ENCODE measurements at regions of chr13 and their contacts with region 1.

Region 1: DNA sequence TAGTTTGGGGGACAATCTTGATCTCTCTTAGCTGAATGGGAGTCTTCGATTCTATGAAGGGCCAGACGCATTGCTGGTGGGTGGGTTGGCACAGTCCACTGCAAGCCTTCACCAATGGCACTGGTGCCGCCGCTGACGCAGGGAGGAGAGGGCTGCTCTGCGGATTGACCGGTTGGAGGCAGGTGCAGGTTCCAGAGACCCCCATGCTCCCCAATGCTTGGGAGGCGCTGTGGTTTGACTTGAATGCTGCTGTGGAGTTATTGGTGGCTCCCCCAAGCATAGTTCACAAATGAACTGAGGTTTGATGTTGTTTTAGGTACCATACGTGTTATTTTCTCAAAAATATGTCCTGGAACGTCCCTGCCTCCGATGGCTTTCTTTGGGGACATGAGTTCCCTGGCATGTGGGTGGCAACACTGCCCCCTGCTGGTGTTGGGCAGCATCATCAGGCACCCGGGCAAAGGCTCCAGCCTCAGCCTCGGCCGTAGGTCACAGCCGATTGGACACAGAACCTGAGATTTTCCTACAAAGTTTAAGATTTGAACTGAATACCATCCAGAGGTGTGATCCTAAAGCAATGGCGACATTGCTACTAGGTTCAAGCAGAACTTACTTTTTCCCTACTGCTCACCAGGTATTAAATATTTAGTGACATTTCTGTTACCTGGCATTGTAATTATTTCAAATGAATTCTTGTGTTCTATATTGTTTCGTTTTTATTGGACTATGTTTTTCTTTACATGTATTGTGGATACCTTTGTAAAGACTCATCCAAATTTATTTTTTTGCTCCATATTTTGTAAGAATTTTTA is 95.5 kb downstream of the ANKRD10 start:
- DNase-seq: peak; percentile 69 to 85
- H3K4me3 ChIP-seq: no peak overlapping the region
- H3K4me1 ChIP-seq: peaks cover 2% of the 10 kb centered on the region; the same call in 1 of the 2 replicates
- H3K27me3 ChIP-seq: no peaks in the 10 kb centered on the region

Region 2: DNA sequence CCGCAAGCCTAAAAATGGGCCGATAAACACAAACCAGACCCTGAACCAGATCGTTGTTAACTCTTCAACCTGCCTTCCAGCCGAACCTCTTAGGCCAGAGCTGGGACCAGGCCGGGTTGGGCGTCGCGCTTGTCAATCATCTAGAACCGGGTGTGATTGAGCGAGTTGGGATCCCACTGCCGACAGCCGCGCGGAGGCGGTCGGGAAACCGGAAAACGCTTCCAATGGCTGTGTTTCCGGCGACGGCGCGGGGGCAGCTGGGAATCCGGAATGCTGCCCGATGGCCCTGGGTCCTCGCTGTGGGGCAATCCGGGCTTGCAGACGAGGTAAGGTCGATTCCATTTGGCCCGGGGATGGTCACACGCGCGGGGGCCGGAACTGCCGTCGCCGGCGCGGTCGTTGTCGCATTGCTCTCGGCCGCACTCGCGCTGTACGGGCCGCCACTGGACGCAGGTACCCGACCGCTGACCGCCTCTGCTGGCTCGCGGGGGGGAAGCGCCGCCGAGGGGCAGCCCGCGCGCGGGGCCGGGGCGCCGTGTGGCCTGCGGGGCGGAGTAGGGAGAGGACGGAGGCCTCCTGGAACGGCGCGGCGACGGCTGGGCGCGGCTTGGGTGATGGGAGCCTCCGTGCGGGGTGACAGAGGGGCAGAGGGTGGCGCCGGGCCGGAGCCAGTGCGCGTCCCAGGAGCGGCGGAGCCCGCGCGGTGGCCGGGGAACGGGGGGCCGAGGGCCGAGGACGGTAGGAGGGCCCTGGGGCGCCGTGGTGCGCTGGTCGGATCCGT is 203.9 kb before region 1 on chr13 and contains the start of gene NAXD:
- in situ Hi-C with region 1: loop called (anchors 25 kb)
- DNase-seq: peak; percentile 84 to 94
- H3K4me3 ChIP-seq: peak within 1 kb of the TSS; percentile 77
- H3K4me1 ChIP-seq: peaks cover 14% of the 10 kb centered on the region
- H3K27me3 ChIP-seq: no peaks in the 10 kb centered on the region